ENCODE measurements at regions of chr12 and their contacts with region 1.

Region 1: GRCh38 chr12:131928711-131929580 is at the start of gene PUS1:
- DNase-seq: peak; percentile 95 to 96
- H3K4me3 ChIP-seq: peak within 1 kb of the TSS; percentile 96
- H3K4me3 Mint-ChIP-seq: peak within 1 kb of the TSS; percentile 97
- H3K27ac Mint-ChIP-seq: peak within 1 kb of the TSS; percentile 97
- H3K4me1 ChIP-seq: no peaks in the 10 kb centered on the region; the same call in 1 of the 2 replicates
- H3K4me1 Mint-ChIP-seq: peaks cover 11% of the 10 kb centered on the region
- H3K27me3 ChIP-seq: no peaks in the 10 kb centered on the region
- H3K27me3 Mint-ChIP-seq: no peaks in the 10 kb centered on the region
- CTCF ChIP-seq: no peak
- total RNA-seq, gene PUS1: 65.6 and 71.9 TPM in 2 replicates

Region 2: GRCh38 chr12:131415781-131416180 is 513.2 kb before region 1 on chr12:
- CTCF ChIA-PET with region 1: no interaction called
- POLR2A ChIA-PET with region 1: no interaction called
- intact Hi-C with region 1: no loop called
- DNase-seq: no peak
- H3K4me3 ChIP-seq: no peak overlapping the region
- H3K4me3 Mint-ChIP-seq: no peak overlapping the region
- H3K27ac Mint-ChIP-seq: no peak overlapping the region
- H3K4me1 ChIP-seq: no peaks in the 10 kb centered on the region
- H3K4me1 Mint-ChIP-seq: no peaks in the 10 kb centered on the region
- H3K27me3 ChIP-seq: no peaks in the 10 kb centered on the region
- H3K27me3 Mint-ChIP-seq: peaks cover 7% of the 10 kb centered on the region
- CTCF ChIP-seq: no peak

Region 3: GRCh38 chr12:131860562-131861291 is 68.2 kb before region 1 on chr12:
- CTCF ChIA-PET with region 1: no interaction called
- POLR2A ChIA-PET with region 1: interaction called, 3 read pairs
- intact Hi-C with region 1: loop called (anchors 5 kb)
- DNase-seq: peak; percentile 96
- H3K4me3 ChIP-seq: peak overlapping the region; percentile 6; the same call in 1 of the 2 replicates
- H3K4me3 Mint-ChIP-seq: peak overlapping the region; percentile 68
- H3K27ac Mint-ChIP-seq: peak overlapping the region; percentile 100
- H3K4me1 ChIP-seq: peaks cover 38% of the 10 kb centered on the region
- H3K4me1 Mint-ChIP-seq: peaks cover 49% of the 10 kb centered on the region
- H3K27me3 ChIP-seq: no peaks in the 10 kb centered on the region
- H3K27me3 Mint-ChIP-seq: no peaks in the 10 kb centered on the region
- CTCF ChIP-seq: no peak

Region 4: GRCh38 chr12:131896080-131896810 is 32.7 kb before region 1 on chr12:
- CTCF ChIA-PET with region 1: no interaction called
- POLR2A ChIA-PET with region 1: no interaction called
- intact Hi-C with region 1: loop called (anchors 1 kb)
- DNase-seq: peak; percentile 91 to 92
- H3K4me3 ChIP-seq: peak overlapping the region; percentile 75
- H3K4me3 Mint-ChIP-seq: peak overlapping the region; percentile 83
- H3K27ac Mint-ChIP-seq: peak overlapping the region; percentile 85
- H3K4me1 ChIP-seq: peaks cover 5% of the 10 kb centered on the region; the same call in 1 of the 2 replicates
- H3K4me1 Mint-ChIP-seq: peaks cover 7% of the 10 kb centered on the region
- H3K27me3 ChIP-seq: no peaks in the 10 kb centered on the region
- H3K27me3 Mint-ChIP-seq: no peaks in the 10 kb centered on the region
- CTCF ChIP-seq: no peak

Region 5: GRCh38 chr12:131949431-131950181 is 20.7 kb after region 1 on chr12 and contains the start of gene EP400:
- CTCF ChIA-PET with region 1: no interaction called
- POLR2A ChIA-PET with region 1: no interaction called
- intact Hi-C with region 1: loop called (anchors 1 kb)
- DNase-seq: peak; percentile 93 to 95
- H3K4me3 ChIP-seq: peak within 1 kb of the TSS; percentile 92
- H3K4me3 Mint-ChIP-seq: peak within 1 kb of the TSS; percentile 81
- H3K27ac Mint-ChIP-seq: peak within 1 kb of the TSS; percentile 79
- H3K4me1 ChIP-seq: peaks cover 5% of the 10 kb centered on the region
- H3K4me1 Mint-ChIP-seq: no peaks in the 10 kb centered on the region
- H3K27me3 ChIP-seq: no peaks in the 10 kb centered on the region
- H3K27me3 Mint-ChIP-seq: no peaks in the 10 kb centered on the region
- CTCF ChIP-seq: peak; percentile 25 to 35
- total RNA-seq, gene EP400: 60.5 and 63.0 TPM in 2 replicates